ENCODE measurements at regions of chr1 and their contacts with region 1.

Region 1: GRCh38 chr1:239413916-239414315 is 27.5 kb downstream of the CHRM3 start:
- DNase-seq: no peak
- ATAC-seq: no peak
- H3K4me3 ChIP-seq: no peak overlapping the region
- H3K27ac ChIP-seq: no peak overlapping the region
- H3K4me1 ChIP-seq: no peaks in the 10 kb centered on the region
- H3K27me3 ChIP-seq: no peaks in the 10 kb centered on the region
- CTCF ChIP-seq: no peak

Region 2: DNA sequence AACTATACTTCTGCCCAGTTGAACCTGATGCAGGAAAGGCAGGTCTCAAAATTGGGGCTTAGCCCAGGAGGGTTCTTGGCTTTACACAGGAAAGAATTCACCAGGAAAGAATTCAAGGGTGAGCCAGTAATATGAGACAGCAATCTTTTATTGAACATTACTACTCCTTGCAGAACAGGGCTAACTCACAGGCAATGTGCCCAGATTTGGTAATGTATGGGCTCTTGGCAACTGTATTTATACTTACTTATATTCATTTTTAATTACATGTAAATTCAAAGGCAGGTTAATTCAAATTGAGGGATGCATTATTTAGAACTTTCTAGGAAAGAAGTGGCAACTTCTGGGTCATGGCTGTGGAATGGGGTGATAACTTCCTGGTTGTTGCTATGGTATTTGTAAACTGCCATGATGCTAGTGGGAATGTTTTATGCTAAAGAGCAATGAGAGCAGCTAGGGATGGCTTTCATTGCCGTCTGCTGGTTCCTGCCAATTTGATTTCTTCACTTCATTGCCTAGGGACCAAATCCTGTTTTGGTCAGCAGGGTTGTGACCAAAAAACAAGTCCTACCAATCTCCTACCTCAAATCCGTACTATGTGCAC is 80.0 kb after region 1 on chr1:
- CTCF ChIA-PET with region 1: no interaction called
- POLR2A ChIA-PET with region 1: no interaction called
- intact Hi-C with region 1: no loop called
- DNase-seq: peak; percentile 86
- ATAC-seq: peak; percentile 96
- H3K4me3 ChIP-seq: no peak overlapping the region
- H3K27ac ChIP-seq: peak overlapping the region; percentile 34
- H3K4me1 ChIP-seq: peaks cover 16% of the 10 kb centered on the region
- H3K27me3 ChIP-seq: no peaks in the 10 kb centered on the region
- CTCF ChIP-seq: no peak

Region 3: GRCh38 chr1:239976130-239976968 is 562.4 kb after region 1 on chr1:
- CTCF ChIA-PET with region 1: no interaction called
- POLR2A ChIA-PET with region 1: no interaction called
- intact Hi-C with region 1: loop called (anchors 5 kb)
- DNase-seq: peak; percentile 86
- ATAC-seq: peak; percentile 84
- H3K4me3 ChIP-seq: no peak overlapping the region
- H3K27ac ChIP-seq: no peak overlapping the region
- H3K4me1 ChIP-seq: peaks cover 6% of the 10 kb centered on the region; the same call in 1 of the 2 replicates
- H3K27me3 ChIP-seq: peaks cover under 1% of the 10 kb centered on the region; the same call in 1 of the 2 replicates
- CTCF ChIP-seq: peak; percentile 99